Activated naive CD4-positive, alpha-beta T cell treated with anti-CD3 and anti-CD28 coated beads for 36 hours (primary cell): ENCODE measurements at regions of chr1 and their contacts with region 1.

Region 1: GRCh38 chr1:241847796-241848685 is at the start of gene EXO1:
- DNase-seq: peak; percentile 93
- H3K4me3 Mint-ChIP-seq: peak within 1 kb of the TSS; percentile 98
- H3K27ac Mint-ChIP-seq: peak within 1 kb of the TSS; percentile 99
- H3K4me1 Mint-ChIP-seq: peaks cover 22% of the 10 kb centered on the region
- H3K27me3 Mint-ChIP-seq: peaks cover 1% of the 10 kb centered on the region
- total RNA-seq, gene EXO1: 55.3 to 59.6 TPM

Region 2: GRCh38 chr1:241551759-241552638 is 296.0 kb before region 1 on chr1:
- CTCF ChIA-PET with region 1: no interaction called
- intact Hi-C with region 1: loop called (anchors 1 kb)
- DNase-seq: peak; percentile 75
- H3K4me3 Mint-ChIP-seq: peak overlapping the region; percentile 67
- H3K27ac Mint-ChIP-seq: peak overlapping the region; percentile 89
- H3K4me1 Mint-ChIP-seq: peaks cover 20% of the 10 kb centered on the region
- H3K27me3 Mint-ChIP-seq: peaks cover 2% of the 10 kb centered on the region

Region 3: DNA sequence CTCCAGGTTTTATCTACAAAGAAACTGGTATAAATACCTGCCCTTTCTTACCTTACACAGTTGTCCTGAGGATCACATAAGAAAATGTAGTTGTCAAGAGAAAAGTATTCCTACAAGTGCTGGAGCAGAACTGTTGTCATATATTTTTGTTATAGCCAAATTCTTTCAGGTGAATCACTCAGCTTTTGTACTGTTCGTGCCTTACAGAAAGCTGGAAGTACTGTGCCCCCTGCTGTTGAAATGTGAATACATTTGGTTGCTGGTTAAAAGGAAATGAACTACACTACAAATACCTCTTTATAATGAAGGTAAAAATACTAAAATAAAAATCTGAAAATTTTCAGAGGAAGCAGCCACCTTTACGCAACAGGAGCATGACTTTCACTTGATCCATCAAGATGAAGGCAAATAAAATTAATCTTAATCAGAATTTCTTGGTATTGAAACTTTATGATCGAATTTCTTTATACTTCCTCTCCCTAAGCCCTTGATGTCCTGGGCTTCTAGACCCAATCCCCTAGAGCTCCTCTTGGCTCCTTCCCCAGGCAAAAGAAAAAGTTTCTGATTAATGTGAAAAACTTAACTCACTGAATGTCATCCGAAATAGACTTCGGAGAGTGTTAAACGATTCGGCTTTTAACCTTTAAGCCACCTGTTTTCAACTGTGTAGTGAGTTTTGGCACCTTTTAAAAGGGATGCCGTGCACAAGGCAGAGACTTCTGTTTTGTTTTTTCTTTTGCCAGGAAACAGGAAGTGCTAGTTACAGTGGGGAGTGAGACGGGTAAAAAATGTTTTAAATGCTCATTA is 220.4 kb before region 1 on chr1:
- CTCF ChIA-PET with region 1: no interaction called
- intact Hi-C with region 1: no loop called
- DNase-seq: peak; percentile 69
- H3K4me3 Mint-ChIP-seq: peak overlapping the region; percentile 49
- H3K27ac Mint-ChIP-seq: peak overlapping the region; percentile 79
- H3K4me1 Mint-ChIP-seq: peaks cover 31% of the 10 kb centered on the region
- H3K27me3 Mint-ChIP-seq: no peaks in the 10 kb centered on the region

Region 4: DNA sequence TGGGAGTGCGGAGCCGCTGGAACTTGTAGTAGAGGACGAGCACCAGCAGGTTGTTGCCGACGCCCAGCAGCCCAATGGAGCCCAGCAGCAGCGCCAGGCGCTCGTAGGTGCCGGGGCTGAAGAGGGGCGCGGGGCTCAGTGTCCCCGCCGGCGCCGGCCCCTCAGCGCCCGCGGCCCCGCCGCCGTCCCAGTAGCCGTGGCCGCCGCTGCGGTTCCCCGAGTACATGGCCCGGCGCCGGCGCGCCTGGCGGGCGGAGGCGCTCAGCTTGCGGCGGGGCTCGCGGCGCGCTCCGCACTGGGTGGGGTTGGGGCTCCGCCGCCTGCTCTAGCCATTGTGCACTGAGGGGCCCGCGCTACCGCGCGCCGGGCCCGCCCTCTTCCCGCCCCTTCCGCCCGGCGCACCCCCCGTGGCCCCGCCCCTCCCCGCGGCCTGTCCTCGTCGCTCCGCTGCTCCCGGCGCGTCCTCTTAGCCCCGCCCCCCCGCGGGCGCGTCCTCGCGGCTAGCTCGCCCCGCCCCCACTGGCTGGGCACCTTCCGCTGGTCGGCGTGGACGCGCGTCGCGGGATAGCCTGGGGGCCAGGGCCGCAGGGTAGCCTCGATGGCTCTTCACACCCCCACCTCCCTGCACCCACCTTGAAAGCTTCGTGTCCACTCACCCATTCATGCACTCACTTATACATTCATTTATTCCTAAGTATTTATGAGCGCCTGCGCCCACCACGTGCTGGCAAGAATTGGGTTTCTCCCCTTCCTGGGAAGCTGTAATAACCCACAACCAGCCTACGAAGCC is 207.8 kb before region 1 on chr1 and contains the starts of genes CHML and OPN3:
- CTCF ChIA-PET with region 1: interaction called, 3 read pairs
- intact Hi-C with region 1: loop called (anchors 1 kb)
- DNase-seq: peak; percentile 93
- H3K4me3 Mint-ChIP-seq: peak within 1 kb of the TSS; percentile 74
- H3K27ac Mint-ChIP-seq: peak within 1 kb of the TSS; percentile 81
- H3K4me1 Mint-ChIP-seq: peaks cover 39% of the 10 kb centered on the region
- H3K27me3 Mint-ChIP-seq: no peaks in the 10 kb centered on the region
- total RNA-seq, gene CHML: 19.9 to 21.1 TPM
- total RNA-seq, gene OPN3: 7.7 to 9.0 TPM

Region 5: GRCh38 chr1:241817261-241817792 is 30.7 kb before region 1 on chr1:
- CTCF ChIA-PET with region 1: no interaction called
- intact Hi-C with region 1: no loop called
- DNase-seq: no peak
- H3K4me3 Mint-ChIP-seq: no peak overlapping the region
- H3K27ac Mint-ChIP-seq: no peak overlapping the region
- H3K4me1 Mint-ChIP-seq: no peaks in the 10 kb centered on the region
- H3K27me3 Mint-ChIP-seq: peaks cover 3% of the 10 kb centered on the region

Region 6: DNA sequence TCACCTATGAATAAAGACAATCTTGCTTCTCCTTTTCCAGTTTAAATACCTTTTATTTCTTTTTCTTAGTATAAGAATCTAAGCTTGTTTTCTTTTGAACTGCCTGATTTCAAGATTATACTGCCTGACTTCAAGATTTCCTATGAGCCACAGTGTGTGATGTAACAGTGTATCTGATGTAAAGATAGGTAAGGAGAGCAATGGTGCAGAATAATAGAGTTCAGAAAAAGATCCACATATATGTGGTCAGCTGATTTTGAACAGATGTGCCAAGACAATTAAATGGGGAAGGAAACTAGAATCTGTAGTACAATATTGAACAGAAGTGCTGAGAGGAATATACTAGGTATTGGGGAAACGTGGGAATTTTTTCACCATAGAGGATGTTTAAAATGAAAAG is 21.0 kb after region 1 on chr1:
- CTCF ChIA-PET with region 1: no interaction called
- intact Hi-C with region 1: no loop called
- DNase-seq: no peak
- H3K4me3 Mint-ChIP-seq: no peak overlapping the region
- H3K27ac Mint-ChIP-seq: no peak overlapping the region
- H3K4me1 Mint-ChIP-seq: no peaks in the 10 kb centered on the region
- H3K27me3 Mint-ChIP-seq: no peaks in the 10 kb centered on the region

Region 7: GRCh38 chr1:241883159-241883558 is 35.1 kb after region 1 on chr1:
- CTCF ChIA-PET with region 1: no interaction called
- intact Hi-C with region 1: no loop called
- DNase-seq: no peak
- H3K4me3 Mint-ChIP-seq: no peak overlapping the region
- H3K27ac Mint-ChIP-seq: no peak overlapping the region
- H3K4me1 Mint-ChIP-seq: no peaks in the 10 kb centered on the region
- H3K27me3 Mint-ChIP-seq: no peaks in the 10 kb centered on the region

Region 8: DNA sequence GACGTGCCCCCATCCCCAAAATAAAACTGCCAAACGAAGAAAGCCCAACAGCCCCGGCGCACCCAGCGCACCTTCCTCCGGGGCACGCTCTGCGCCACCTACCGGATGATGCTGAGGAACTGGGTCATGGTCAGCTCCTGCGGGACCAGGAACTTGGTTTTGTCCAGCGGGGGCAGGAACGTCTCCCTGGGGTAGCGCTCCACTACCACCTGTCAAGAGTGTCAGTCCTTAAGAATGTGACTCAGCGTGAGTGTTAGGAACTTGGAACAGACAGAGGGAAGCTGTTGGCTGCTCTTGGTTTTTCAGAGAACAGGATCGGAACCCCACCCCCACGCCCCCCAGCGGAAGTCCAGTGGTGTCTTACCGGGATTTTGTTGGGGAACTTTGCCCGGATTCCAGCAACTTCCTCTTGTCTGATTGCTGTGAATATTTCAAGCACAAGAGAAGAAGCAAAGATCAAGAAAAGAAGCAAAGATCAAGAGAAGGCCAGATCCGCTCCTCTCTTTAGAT is 150.4 kb after region 1 on chr1:
- CTCF ChIA-PET with region 1: interaction called, 6 read pairs
- intact Hi-C with region 1: loop called (anchors 1 kb)
- DNase-seq: peak; percentile 68
- H3K4me3 Mint-ChIP-seq: peak overlapping the region; percentile 54
- H3K27ac Mint-ChIP-seq: no peak overlapping the region
- H3K4me1 Mint-ChIP-seq: peaks cover 3% of the 10 kb centered on the region
- H3K27me3 Mint-ChIP-seq: peaks cover 1% of the 10 kb centered on the region